ENCODE measurements at regions of chr19 and their contacts with region 1.

Region 1: GRCh38 chr19:45692187-45693105 is at the start of gene QPCTL:
- DNase-seq: peak; percentile 76 to 99 (median 97)
- ATAC-seq: peak; percentile 93
- H3K4me3 ChIP-seq: peak within 1 kb of the TSS; percentile 90
- H3K4me3 Mint-ChIP-seq: peak within 1 kb of the TSS; percentile 89 to 99 (median 97)
- H3K27ac ChIP-seq: peak within 1 kb of the TSS; percentile 89
- H3K27ac Mint-ChIP-seq: peak within 1 kb of the TSS; percentile 94 to 98 (median 96)
- H3K4me1 ChIP-seq: peaks cover 7 to 15% of the 10 kb centered on the region in 2 donors
- H3K4me1 Mint-ChIP-seq: peaks cover 13 to 38% (median 22%) of the 10 kb centered on the region in 7 donors
- H3K27me3 ChIP-seq: no peaks in the 10 kb centered on the region
- H3K27me3 Mint-ChIP-seq: peaks cover 0 to 2% (median 0%) of the 10 kb centered on the region in 5 donors
- total RNA-seq, gene QPCTL: 6.1 to 8.9 (median 7.9) TPM

Region 2: GRCh38 chr19:44954824-44955586 is 737.4 kb before region 1 on chr19 and contains the start of gene CLPTM1:
- CTCF ChIA-PET with region 1: no interaction called
- POLR2A ChIA-PET with region 1: no interaction called
- intact Hi-C with region 1: loop called in 1 of 2 experiments (anchors 5 kb)
- DNase-seq: peak; percentile 85 to 96 (median 94)
- ATAC-seq: peak; percentile 97
- H3K4me3 ChIP-seq: peak within 1 kb of the TSS; percentile 92
- H3K4me3 Mint-ChIP-seq: peak within 1 kb of the TSS; percentile 90 to 99 (median 98)
- H3K27ac ChIP-seq: peak within 1 kb of the TSS; percentile 92
- H3K27ac Mint-ChIP-seq: peak within 1 kb of the TSS; percentile 97 to 99 (median 98)
- H3K4me1 ChIP-seq: peaks cover 12 to 24% of the 10 kb centered on the region in 2 donors
- H3K4me1 Mint-ChIP-seq: peaks cover 27 to 63% (median 56%) of the 10 kb centered on the region in 7 donors
- H3K27me3 ChIP-seq: no peaks in the 10 kb centered on the region
- H3K27me3 Mint-ChIP-seq: no peaks in the 10 kb centered on the region
- total RNA-seq, gene CLPTM1: 68.4 to 83.3 (median 76.8) TPM

Region 3: GRCh38 chr19:45423589-45424190 is 268.8 kb before region 1 on chr19 and contains the start of gene ERCC1:
- CTCF ChIA-PET with region 1: no interaction called
- POLR2A ChIA-PET with region 1: no interaction called
- intact Hi-C with region 1: loop called in 1 of 2 experiments (anchors 5 kb)
- DNase-seq: peak in 7 of 9 donors; percentile 25 to 83 (median 52)
- ATAC-seq: peak; percentile 71
- H3K4me3 ChIP-seq: peak within 1 kb of the TSS; percentile 72
- H3K4me3 Mint-ChIP-seq: peak within 1 kb of the TSS; percentile 88 to 100 (median 94)
- H3K27ac ChIP-seq: peak within 1 kb of the TSS; percentile 77
- H3K27ac Mint-ChIP-seq: peak within 1 kb of the TSS; percentile 83 to 97 (median 91)
- H3K4me1 ChIP-seq: peaks cover 24 to 28% of the 10 kb centered on the region in 2 donors
- H3K4me1 Mint-ChIP-seq: peaks cover 22 to 57% (median 50%) of the 10 kb centered on the region in 7 donors
- H3K27me3 ChIP-seq: peaks cover 0 to 3% of the 10 kb centered on the region in 2 donors
- H3K27me3 Mint-ChIP-seq: peaks cover 0 to 10% (median 3%) of the 10 kb centered on the region in 5 donors
- total RNA-seq, gene ERCC1: 45.1 to 88.2 (median 53.4) TPM

Region 4: GRCh38 chr19:45506246-45506990 is 186.0 kb before region 1 on chr19:
- CTCF ChIA-PET with region 1: no interaction called
- POLR2A ChIA-PET with region 1: interaction called, 4 read pairs
- intact Hi-C with region 1: loop called (anchors 1 kb)
- DNase-seq: peak; percentile 95 to 99 (median 98)
- ATAC-seq: peak; percentile 88
- H3K4me3 ChIP-seq: peak overlapping the region; percentile 99
- H3K4me3 Mint-ChIP-seq: peak overlapping the region; percentile 91 to 96 (median 94)
- H3K27ac ChIP-seq: peak overlapping the region; percentile 87
- H3K27ac Mint-ChIP-seq: peak overlapping the region; percentile 91 to 98 (median 97)
- H3K4me1 ChIP-seq: peaks cover 14 to 20% of the 10 kb centered on the region in 2 donors
- H3K4me1 Mint-ChIP-seq: peaks cover 29 to 46% (median 34%) of the 10 kb centered on the region in 7 donors
- H3K27me3 ChIP-seq: no peaks in the 10 kb centered on the region
- H3K27me3 Mint-ChIP-seq: no peaks in the 10 kb centered on the region

Region 5: DNA sequence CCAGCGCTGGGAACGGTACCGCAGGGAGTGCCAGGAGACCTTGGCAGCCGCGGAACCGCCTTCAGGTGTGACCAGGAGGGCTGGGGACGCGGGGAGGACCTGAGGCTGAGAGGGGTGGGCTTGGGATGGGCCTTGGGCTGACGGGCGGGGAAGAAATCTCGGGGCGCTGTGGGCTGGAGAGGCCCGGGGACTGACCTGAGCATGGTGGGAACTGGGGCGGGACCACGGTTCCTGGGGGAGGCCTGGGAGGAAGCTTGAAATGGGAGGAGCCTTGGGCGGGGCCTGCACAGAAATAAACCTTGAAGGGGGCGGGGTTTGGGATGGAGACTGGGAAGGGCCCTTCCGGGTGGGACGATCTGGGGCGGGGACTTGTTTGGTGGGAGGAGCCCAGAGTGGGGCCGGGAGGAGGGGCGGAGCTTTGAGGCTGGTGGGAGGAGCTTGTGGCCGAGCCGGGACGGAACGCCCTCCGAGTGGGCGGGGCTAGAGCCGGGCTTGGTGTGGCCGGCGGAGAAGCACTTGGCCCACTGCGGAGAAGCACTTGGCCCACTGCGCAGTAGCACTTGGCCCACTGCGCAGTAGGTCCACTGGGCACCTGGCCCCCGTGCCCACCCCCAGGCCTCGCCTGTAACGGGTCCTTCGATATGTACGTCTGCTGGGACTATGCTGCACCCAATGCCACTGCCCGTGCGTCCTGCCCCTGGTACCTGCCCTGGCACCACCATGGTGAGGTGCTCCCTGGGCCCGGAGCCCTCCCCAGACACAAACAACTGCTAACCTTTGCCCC is 21.6 kb before region 1 on chr19:
- CTCF ChIA-PET with region 1: interaction called, 5 read pairs
- POLR2A ChIA-PET with region 1: interaction called, 3 read pairs
- intact Hi-C with region 1: loop called (anchors 1 to 2 kb)
- DNase-seq: peak in 4 of 9 donors; percentile 14 to 87 (median 31)
- ATAC-seq: peak; percentile 58
- H3K4me3 ChIP-seq: no peak overlapping the region
- H3K4me3 Mint-ChIP-seq: peak overlapping the region in 8 of 10 donors; percentile 39 to 96 (median 74)
- H3K27ac ChIP-seq: no peak overlapping the region
- H3K27ac Mint-ChIP-seq: peak overlapping the region in 1 of 9 donors; percentile 13
- H3K4me1 ChIP-seq: peaks cover 15 to 25% of the 10 kb centered on the region in 2 donors
- H3K4me1 Mint-ChIP-seq: peaks cover 30 to 39% (median 32%) of the 10 kb centered on the region in 7 donors
- H3K27me3 ChIP-seq: no peaks in the 10 kb centered on the region
- H3K27me3 Mint-ChIP-seq: peaks cover 0 to 22% (median 17%) of the 10 kb centered on the region in 5 donors

Region 6: GRCh38 chr19:45770192-45771101 is 78.0 kb after region 1 on chr19:
- CTCF ChIA-PET with region 1: no interaction called
- POLR2A ChIA-PET with region 1: interaction called, 4 read pairs
- intact Hi-C with region 1: loop called (anchors 1 kb)
- DNase-seq: peak; percentile 84 to 97 (median 93)
- ATAC-seq: peak; percentile 85
- H3K4me3 ChIP-seq: peak overlapping the region; percentile 95
- H3K4me3 Mint-ChIP-seq: peak overlapping the region; percentile 81 to 92 (median 88)
- H3K27ac ChIP-seq: peak overlapping the region; percentile 64
- H3K27ac Mint-ChIP-seq: peak overlapping the region in 7 of 9 donors; percentile 43 to 93 (median 85)
- H3K4me1 ChIP-seq: peaks cover 9 to 13% of the 10 kb centered on the region in 2 donors
- H3K4me1 Mint-ChIP-seq: peaks cover 0 to 16% (median 8%) of the 10 kb centered on the region in 7 donors
- H3K27me3 ChIP-seq: no peaks in the 10 kb centered on the region
- H3K27me3 Mint-ChIP-seq: peaks cover 0 to 28% (median 4%) of the 10 kb centered on the region in 5 donors

Region 7: DNA sequence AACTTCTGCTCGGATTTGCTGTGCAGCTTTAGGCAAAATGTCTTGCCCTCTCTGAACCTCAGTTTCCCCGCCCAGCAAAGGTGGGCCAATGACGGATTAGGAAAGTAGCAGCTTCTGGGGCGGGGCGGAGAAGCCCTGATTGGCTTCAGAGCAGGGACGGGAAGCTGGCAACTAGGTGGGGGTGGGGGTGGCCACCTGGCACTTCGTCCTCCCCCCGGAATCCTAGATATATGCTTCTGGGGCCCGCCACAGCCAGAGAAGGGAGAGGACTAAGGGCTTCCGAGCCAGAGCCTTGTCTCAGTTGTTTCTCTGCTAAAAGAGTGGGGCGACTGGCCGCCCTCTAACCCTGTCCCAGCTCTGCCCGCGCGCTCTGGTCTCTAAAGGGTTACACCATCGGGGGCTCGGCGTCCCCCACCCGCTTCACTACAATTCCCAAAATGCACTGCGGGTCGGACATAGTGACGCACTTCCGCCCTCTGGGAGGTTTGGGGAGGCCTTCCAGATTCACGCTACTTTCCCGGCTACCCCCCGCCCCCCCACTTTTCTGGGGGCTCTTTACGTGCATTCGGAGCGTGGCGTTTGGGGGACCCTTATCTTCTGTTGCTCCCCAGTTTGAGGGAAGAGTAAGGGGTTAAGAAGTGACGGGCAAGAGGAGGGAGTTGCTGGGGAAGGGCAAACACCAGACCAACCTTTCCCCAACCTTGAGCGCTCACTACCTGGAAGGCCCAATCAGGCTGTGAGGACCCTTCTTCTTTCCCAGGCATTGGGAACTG is 194.2 kb after region 1 on chr19:
- CTCF ChIA-PET with region 1: interaction called, 3 read pairs
- POLR2A ChIA-PET with region 1: no interaction called
- intact Hi-C with region 1: loop called in 1 of 2 experiments (anchors 1 kb)
- DNase-seq: peak; percentile 76 to 93 (median 88)
- ATAC-seq: peak; percentile 85
- H3K4me3 ChIP-seq: peak overlapping the region; percentile 99
- H3K4me3 Mint-ChIP-seq: peak overlapping the region; percentile 93 to 99 (median 97)
- H3K27ac ChIP-seq: peak overlapping the region; percentile 86
- H3K27ac Mint-ChIP-seq: peak overlapping the region; percentile 92 to 99 (median 97)
- H3K4me1 ChIP-seq: peaks cover 15 to 34% of the 10 kb centered on the region in 2 donors
- H3K4me1 Mint-ChIP-seq: peaks cover 10 to 32% (median 19%) of the 10 kb centered on the region in 7 donors
- H3K27me3 ChIP-seq: no peaks in the 10 kb centered on the region
- H3K27me3 Mint-ChIP-seq: no peaks in the 10 kb centered on the region

Region 8: GRCh38 chr19:46009530-46010510 is 317.4 kb after region 1 on chr19:
- CTCF ChIA-PET with region 1: no interaction called
- POLR2A ChIA-PET with region 1: no interaction called
- intact Hi-C with region 1: no loop called
- DNase-seq: peak; percentile 25 to 68 (median 54)
- ATAC-seq: peak; percentile 85
- H3K4me3 ChIP-seq: no peak overlapping the region
- H3K4me3 Mint-ChIP-seq: peak overlapping the region in 1 of 10 donors; percentile 77
- H3K27ac ChIP-seq: no peak overlapping the region
- H3K27ac Mint-ChIP-seq: peak overlapping the region in 2 of 9 donors; percentile 45 to 71
- H3K4me1 ChIP-seq: no peaks in the 10 kb centered on the region
- H3K4me1 Mint-ChIP-seq: peaks cover 6 to 10% (median 6%) of the 10 kb centered on the region in 7 donors
- H3K27me3 ChIP-seq: peaks cover 0 to 6% of the 10 kb centered on the region in 2 donors
- H3K27me3 Mint-ChIP-seq: peaks cover 5 to 9% (median 6%) of the 10 kb centered on the region in 5 donors

Measured in naive thymus-derived CD4-positive, alpha-beta T cell (primary cell).